ENCODE measurements at regions of chr22 and their contacts with region 1.

Region 1: GRCh38 chr22:25362215-25362882 is 142.9 kb downstream of the CRYBB2 start:
- DNase-seq: peak; percentile 58 to 79
- ATAC-seq: peak; percentile 51 to 80 (median 76)
- H3K4me3 ChIP-seq: no peak overlapping the region
- H3K27ac ChIP-seq: no peak overlapping the region
- H3K4me1 ChIP-seq: no peaks in the 10 kb centered on the region
- H3K27me3 ChIP-seq: no peaks in the 10 kb centered on the region
- CTCF ChIP-seq: peak; percentile 76

Region 2: DNA sequence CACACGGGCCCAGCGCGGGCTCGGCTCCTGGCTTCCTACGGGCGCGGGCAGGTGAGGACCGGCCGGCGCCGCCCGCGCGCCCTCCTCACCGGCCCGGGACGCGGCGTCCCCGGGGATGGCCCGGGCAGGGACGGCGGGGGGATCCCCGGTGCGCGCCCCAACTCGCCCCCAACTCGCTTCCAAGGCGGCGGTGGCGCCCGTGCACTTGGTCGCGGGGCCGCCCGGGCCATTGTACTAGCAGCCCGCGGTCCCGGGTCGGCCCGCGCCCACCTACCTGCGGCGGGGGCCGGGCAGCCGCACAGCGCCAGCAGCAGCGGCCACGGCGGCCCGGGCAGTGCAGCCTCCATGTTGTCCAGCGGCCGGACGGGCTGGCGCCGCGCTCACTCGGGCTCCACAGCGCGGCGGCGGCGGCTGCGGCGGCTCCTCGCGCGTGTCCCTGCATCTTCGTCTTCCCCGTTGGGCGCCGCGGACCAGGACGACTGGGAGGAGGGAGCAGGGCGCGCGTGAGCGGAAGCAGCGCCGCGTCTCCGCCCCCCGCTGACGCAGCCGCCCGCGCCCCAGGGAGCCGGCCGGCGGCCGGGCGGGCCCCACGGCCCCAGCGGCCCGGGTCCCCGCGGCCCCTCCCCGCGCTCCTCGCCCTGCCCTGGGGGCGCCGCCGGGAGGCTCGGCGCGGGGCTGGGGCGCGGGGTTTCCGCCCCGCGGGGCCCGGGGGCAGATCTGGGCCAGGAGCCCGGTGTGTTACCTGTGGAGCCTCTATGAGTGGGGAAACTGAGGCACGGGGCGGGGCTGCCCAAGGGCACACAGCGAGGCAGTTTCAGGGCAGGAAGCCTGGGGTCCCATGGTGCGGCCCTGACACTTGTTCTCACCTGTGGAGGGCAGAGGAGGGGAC is 42.8 kb after region 1 on chr22:
- intact Hi-C with region 1: no loop called
- DNase-seq: peak; percentile 84 to 87
- ATAC-seq: peak; percentile 48 to 78 (median 56)
- H3K4me3 ChIP-seq: peak overlapping the region; percentile 79
- H3K27ac ChIP-seq: peak overlapping the region; percentile 77
- H3K4me1 ChIP-seq: peaks cover 24% of the 10 kb centered on the region
- H3K27me3 ChIP-seq: no peaks in the 10 kb centered on the region
- CTCF ChIP-seq: no peak

Region 3: DNA sequence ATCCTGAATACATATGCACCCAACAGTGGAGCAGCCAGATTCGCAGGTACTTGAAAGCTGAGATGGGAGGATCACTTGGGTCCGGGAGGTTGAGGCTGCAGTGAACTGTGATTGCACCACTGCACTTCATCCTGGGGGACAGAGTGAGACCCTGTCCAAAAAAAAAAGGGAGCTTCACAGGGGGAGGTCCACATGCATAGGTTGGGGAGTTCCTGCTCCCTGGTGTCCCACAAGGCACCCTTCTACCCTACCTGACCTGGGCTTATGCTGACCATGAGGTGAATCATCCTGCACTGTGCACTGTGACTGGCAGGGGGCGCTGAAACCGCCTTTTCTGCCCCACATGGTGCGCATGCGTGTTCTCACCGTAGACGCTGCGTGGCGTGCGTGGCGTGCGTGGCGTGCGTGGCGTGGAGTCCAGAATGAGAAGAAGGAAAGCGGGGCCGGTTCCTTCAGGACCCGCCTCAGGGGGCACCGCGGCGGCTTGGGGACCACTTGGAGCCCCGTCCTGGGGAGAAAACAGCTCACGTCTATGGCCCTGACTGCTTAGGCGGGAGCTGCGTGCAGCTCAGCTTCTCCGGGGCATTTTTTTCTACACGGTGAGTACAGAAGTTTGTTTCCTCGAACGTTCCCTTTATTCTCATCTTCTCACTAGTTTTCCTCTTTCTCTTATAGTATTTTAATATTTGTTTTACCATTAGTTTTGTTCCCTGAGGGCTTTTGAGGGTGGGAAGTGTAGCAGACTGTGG is 85.5 kb after region 1 on chr22:
- intact Hi-C with region 1: loop called in 1 of 2 experiments (anchors 2 kb)
- DNase-seq: peak; percentile 92 to 96
- ATAC-seq: peak; percentile 98 to 99 (median 99)
- H3K4me3 ChIP-seq: peak overlapping the region; percentile 72
- H3K27ac ChIP-seq: peak overlapping the region; percentile 75
- H3K4me1 ChIP-seq: peaks cover 22% of the 10 kb centered on the region
- H3K27me3 ChIP-seq: no peaks in the 10 kb centered on the region
- CTCF ChIP-seq: peak; percentile 85

Region 4: GRCh38 chr22:25621986-25622385 is 259.6 kb after region 1 on chr22:
- intact Hi-C with region 1: no loop called
- DNase-seq: no peak
- ATAC-seq: no peak
- H3K4me3 ChIP-seq: no peak overlapping the region
- H3K27ac ChIP-seq: no peak overlapping the region
- H3K4me1 ChIP-seq: no peaks in the 10 kb centered on the region
- H3K27me3 ChIP-seq: no peaks in the 10 kb centered on the region
- CTCF ChIP-seq: no peak

Measured in psoas muscle (tissue), 8 donors.